ENCODE measurements at regions of chr11 and their contacts with region 1.

Region 1: DNA sequence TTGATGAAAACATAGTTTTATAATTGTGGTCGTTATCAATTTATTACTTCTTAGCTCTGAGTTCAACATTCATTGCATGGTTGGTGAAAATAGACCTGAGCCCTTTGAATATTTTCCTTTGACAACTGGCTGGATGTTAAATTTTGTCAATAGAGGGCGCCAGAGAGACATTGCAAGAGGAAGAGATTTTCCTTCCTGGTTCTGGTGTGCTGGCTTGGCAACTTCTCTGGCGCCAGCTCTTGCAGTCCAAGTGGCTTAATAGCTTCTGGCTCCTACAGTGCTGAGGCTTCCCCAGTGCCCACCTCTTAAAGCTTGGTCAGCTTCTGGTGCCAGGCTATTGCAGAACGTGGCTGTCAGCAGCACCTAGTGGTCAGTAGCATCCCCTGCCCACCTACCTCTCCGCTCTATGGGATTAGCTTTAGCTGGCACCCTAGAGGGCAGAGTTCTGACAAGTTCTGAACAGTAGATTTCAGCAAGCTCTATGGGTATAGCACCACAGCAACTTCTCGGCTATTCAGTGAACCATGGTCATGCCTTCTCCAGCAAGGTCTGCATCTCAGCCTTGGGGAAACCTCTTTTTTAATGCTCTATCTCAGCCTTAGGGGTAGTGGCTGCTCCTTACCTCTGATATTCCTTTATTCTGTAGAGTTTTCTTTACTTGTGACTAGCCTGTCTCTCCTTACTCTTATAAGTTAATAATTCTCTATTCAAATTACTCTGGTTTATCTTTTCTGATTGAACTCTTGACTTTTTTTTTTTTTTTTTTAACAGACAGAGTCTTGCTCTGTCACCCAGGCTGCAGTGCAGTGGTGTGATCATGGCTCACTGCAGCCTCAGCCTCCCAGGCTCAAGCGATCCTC is 59.4 kb downstream of the ACER3 start:
- DNase-seq: peak; percentile 82
- H3K4me3 Mint-ChIP-seq: peak overlapping the region; percentile 51
- H3K27ac Mint-ChIP-seq: peak overlapping the region; percentile 71
- H3K4me1 Mint-ChIP-seq: peaks cover 8% of the 10 kb centered on the region
- H3K27me3 Mint-ChIP-seq: no peaks in the 10 kb centered on the region
- CTCF ChIP-seq: peak; percentile 81

Region 2: GRCh38 chr11:76734456-76735420 is 185.4 kb before region 1 on chr11:
- CTCF ChIA-PET with region 1: interaction called, 50 read pairs
- intact Hi-C with region 1: loop called (anchors 1 kb)
- DNase-seq: no peak
- H3K4me3 Mint-ChIP-seq: no peak overlapping the region
- H3K27ac Mint-ChIP-seq: no peak overlapping the region
- H3K4me1 Mint-ChIP-seq: no peaks in the 10 kb centered on the region
- H3K27me3 Mint-ChIP-seq: peaks cover 32% of the 10 kb centered on the region
- CTCF ChIP-seq: no peak

Region 3: DNA sequence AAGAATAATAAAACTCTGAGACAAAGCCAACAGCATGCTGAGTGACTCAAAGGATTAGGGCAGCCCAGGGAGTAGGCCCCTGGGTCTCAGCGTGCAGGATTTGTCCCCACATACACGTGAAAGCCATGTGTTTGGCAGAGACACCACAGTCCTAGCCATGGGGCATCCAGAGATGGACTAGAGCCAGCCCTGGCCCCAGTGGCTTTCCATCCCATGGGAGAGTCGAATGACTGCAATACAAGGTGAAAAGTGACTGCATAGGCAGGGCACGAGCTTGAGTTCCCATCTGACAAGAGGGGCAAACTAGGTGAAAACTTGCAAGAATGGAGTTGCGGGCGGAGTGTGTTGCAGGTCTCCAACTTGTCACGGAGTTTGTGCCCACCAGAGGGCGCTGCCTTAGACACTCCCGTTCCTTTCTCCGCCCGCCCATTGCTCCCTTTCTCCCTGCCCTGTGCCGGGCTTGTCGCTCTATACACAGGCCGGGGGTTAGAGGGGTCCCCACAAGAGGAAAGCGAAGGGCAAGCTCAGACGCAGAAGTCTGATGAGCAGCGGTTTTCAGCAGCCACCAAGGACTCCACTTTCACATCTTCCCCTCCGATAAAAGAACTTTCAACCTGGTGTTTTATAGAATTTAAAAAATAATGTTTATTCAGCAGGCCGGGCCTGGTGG is 112.8 kb before region 1 on chr11:
- CTCF ChIA-PET with region 1: interaction called, 28 read pairs
- intact Hi-C with region 1: loop called (anchors 1 kb)
- DNase-seq: peak; percentile 90
- H3K4me3 Mint-ChIP-seq: no peak overlapping the region
- H3K27ac Mint-ChIP-seq: peak overlapping the region; percentile 17
- H3K4me1 Mint-ChIP-seq: peaks cover 19% of the 10 kb centered on the region
- H3K27me3 Mint-ChIP-seq: no peaks in the 10 kb centered on the region
- CTCF ChIP-seq: peak; percentile 87

Region 4: DNA sequence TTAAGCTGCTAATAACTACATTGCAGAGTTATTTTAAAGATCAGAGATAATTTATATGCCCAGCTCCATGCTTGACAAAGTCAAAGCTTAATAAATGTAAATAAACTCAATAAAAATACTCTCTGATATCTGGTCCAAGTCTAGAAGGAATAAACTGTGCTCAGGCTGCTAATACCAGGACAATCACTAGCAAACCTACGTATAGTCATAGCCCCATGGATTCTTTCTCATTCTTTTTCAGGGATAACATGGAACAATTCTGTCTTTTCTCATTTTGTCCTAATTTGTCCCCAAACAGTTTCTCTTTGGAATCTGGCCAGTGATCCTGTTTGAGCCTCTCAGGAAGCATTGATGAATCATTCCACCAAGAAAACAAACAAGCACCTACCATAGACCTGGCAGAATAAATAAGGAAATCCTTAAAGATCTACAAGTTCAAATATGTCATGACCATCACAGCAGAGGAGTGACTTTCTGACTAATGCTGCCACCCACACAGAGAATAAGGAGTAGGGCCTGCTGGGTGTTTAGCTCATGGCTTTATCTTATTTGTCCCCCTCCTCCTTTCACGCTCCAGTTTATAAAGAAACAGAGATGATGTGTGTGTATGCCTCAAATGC is 100.0 kb after region 1 on chr11:
- CTCF ChIA-PET with region 1: interaction called, 14 read pairs
- intact Hi-C with region 1: loop called (anchors 5 kb)
- DNase-seq: peak; percentile 46
- H3K4me3 Mint-ChIP-seq: peak overlapping the region; percentile 9
- H3K27ac Mint-ChIP-seq: peak overlapping the region; percentile 83
- H3K4me1 Mint-ChIP-seq: peaks cover 59% of the 10 kb centered on the region
- H3K27me3 Mint-ChIP-seq: no peaks in the 10 kb centered on the region
- CTCF ChIP-seq: no peak

Region 5: DNA sequence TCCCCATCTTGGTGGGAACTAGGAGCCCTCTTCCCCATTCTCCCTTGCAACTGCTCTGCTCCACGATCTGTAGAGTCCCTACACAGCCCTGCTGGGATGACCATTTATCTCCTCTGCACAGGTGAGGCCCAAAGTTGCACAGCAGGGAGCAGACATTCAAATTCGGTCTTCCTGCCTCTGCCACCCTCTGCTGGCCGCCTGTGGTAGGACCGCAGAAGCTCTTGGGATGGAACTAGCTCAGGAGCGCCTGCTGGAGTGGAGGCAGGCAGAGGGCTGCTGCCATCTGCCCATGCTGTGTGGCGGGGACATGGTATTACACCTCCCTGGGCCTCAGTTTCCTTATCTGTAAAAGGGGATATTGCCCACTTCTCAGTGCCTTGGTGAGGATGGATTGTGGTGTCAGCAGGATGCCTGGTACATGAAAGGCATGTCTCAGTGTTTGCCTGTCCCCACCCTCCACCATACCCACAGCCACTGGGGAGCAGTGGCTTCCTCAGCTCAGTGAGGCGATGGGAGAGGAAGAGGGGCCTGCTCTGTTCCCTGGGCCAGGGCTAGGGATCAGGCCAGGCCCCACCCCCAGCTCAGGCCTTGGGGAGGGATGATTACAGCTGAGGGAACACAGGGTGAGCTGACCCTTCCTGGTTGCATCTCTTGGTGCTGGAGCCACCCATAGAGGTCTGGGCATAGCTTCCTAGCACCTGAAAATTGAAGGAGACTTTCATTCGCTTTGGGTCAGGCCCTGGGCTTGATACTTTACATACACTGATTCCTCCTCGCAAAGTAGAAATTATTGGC is 171.2 kb after region 1 on chr11:
- CTCF ChIA-PET with region 1: interaction called, 19 read pairs
- intact Hi-C with region 1: loop called (anchors 1 kb)
- DNase-seq: peak; percentile 89
- H3K4me3 Mint-ChIP-seq: no peak overlapping the region
- H3K27ac Mint-ChIP-seq: no peak overlapping the region
- H3K4me1 Mint-ChIP-seq: peaks cover 56% of the 10 kb centered on the region
- H3K27me3 Mint-ChIP-seq: no peaks in the 10 kb centered on the region
- CTCF ChIP-seq: peak; percentile 95